ENCODE measurements at regions of chr6 and their contacts with region 1.

Region 1: DNA sequence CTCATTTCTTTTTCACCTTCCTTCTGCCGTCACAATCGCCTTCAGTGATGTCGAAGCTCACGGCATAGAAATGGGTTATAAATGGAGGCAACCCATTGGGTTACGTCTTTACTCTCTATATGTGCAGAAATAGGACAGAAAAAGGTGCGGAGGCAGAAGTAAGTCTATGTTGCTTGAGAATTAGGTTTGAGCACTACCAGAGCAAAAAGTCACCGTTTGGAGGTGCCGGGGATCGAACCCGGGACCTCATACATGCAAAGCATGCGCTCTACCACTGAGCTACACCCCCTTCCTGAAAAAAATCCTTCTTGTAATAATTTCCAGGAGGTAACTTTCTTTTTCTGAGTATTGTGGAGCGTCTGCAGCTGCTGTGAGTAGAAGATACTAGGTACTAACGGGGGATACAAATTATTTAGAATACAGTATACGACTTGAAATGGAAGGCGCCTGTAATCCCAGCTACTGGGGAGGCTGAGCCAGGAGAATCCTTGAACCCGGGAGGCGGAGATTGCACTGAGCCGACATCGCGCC is 134.2 kb downstream of the TRIM27 start:
- DNase-seq: peak; percentile 76
- H3K4me3 ChIP-seq: peak overlapping the region; percentile 49 to 72 (median 54)
- H3K27ac ChIP-seq: no peak overlapping the region
- H3K4me1 ChIP-seq: peaks cover 5% of the 10 kb centered on the region
- H3K27me3 ChIP-seq: peaks cover 32% of the 10 kb centered on the region
- CTCF ChIP-seq: no peak

Region 2: DNA sequence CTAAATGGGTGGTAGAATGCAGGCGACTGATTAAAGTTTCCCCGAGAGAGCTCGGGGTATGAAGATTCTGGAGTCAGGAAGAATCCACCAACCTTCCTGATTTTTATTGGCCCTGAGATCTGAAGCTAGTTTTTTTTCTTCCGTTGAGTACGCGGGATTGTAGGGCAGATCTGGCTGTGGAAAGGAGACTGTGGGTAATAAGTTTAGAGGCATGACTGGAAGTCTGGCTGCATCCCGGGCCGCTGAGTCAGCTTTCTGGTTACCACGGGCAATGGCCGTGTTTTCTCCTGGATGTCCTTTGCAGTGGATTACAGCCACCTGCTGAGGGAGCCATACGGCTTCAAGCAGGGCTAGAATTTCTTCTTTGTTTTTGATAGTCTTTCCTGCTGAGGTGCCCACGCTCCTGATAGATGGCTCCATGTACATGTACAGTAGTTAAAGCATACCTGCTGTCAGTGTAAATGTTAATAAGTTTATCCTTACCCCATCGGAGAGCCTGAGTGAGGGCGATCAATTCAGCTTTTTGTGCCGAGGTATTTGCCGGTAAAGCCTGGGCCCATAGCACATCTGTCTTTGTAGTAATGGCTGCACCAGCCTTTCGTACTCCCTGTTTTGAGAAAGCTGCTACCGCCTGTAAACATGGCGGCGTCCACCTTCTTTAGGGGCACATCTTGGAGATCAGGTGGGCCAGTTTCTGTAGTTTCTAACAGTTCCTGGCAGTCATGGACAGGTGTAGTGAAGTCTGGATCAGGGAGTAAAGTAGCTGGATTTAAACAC is 19.8 kb before region 1 on chr6:
- CTCF ChIA-PET with region 1: no interaction called
- dilution Hi-C with region 1: no loop called
- in situ Hi-C with region 1: no loop called
- intact Hi-C with region 1: loop called (anchors 2 kb)
- DNase-seq: peak; percentile 72
- H3K4me3 ChIP-seq: no peak overlapping the region
- H3K27ac ChIP-seq: no peak overlapping the region
- H3K4me1 ChIP-seq: no peaks in the 10 kb centered on the region
- H3K27me3 ChIP-seq: peaks cover 60% of the 10 kb centered on the region
- CTCF ChIP-seq: peak; percentile 31 to 60

Region 3: GRCh38 chr6:29332672-29333071 is 543.1 kb after region 1 on chr6:
- CTCF ChIA-PET with region 1: no interaction called
- dilution Hi-C with region 1: no loop called
- in situ Hi-C with region 1: no loop called
- intact Hi-C with region 1: no loop called
- DNase-seq: no peak
- H3K4me3 ChIP-seq: no peak overlapping the region
- H3K27ac ChIP-seq: no peak overlapping the region
- H3K4me1 ChIP-seq: no peaks in the 10 kb centered on the region
- H3K27me3 ChIP-seq: peaks cover 4% of the 10 kb centered on the region
- CTCF ChIP-seq: no peak

Measured in mammary epithelial cell (primary cell).